GM10248 (cell line): ENCODE measurements at regions of chr10 and their contacts with region 1.

Region 1: DNA sequence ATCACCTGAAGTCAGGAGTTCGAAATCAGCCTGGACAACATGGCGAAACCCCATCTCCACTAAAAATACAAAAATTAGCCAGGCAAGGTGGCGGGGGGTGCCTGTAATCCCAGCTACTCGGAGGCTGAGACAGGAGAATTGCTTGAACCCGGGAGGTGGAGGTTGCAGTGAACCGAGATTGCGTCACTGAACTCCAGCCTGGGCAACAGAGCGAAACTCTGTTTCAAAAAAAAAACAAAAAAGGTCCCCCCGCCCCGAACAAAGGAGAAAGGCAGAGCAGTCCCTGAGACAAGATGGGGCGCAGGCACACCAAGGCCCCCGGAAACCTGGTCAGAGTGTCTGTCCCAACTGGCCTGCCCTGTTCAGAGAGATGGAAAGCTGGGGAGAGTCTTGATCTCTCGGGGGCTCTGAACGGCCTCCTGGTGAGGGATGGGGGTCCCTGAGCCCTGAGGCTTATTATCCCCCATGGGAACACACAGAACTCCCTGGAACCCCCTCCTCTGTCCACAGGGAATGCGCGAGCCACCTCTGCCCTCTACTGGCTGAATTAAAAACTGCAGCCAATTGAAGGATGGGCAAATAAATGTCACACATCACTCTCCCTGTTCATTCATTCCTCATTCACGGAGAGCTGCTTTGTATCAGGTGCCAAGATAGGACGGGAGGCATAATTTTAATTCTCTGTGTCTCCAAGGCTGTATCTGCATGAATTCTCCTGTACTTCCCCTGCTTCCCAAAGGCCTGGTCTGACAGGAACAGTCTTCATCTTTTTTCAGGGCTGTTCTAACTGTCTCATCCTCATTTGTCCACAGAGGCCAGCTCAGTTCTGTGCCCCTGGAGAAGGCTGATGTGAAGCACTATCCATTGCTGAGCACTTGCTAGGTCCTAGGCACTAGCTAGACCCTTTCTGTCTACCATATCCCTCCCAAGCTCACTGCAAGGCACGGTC is 28.9 kb downstream of the MAT1A start:
- DNase-seq: peak; percentile 55
- CTCF ChIP-seq: peak; percentile 97

Region 2: GRCh38 chr10:80168679-80169380 is 91.7 kb before region 1 on chr10:
- CTCF ChIA-PET with region 1: no interaction called
- POLR2A ChIA-PET with region 1: no interaction called
- DNase-seq: peak; percentile 72
- CTCF ChIP-seq: peak; percentile 42

Region 3: GRCh38 chr10:80272793-80273517 is 12.4 kb after region 1 on chr10:
- CTCF ChIA-PET with region 1: interaction called, 14 read pairs
- POLR2A ChIA-PET with region 1: no interaction called
- DNase-seq: no peak
- CTCF ChIP-seq: no peak